Natural killer cell (primary cell): ENCODE measurements at regions of chr1 and their contacts with region 1.

Region 1: GRCh38 chr1:202184750-202185460 is 8.7 kb upstream of the LGR6 start:
- DNase-seq: peak; percentile 65 to 83
- ATAC-seq: peak; percentile 49 to 72 (median 68)
- H3K4me3 ChIP-seq: no peak overlapping the region
- H3K4me3 Mint-ChIP-seq: no peak overlapping the region
- H3K27ac ChIP-seq: no peak overlapping the region
- H3K27ac Mint-ChIP-seq: peak overlapping the region in 1 of 2 donors; percentile 38
- H3K4me1 ChIP-seq: peaks cover 7% of the 10 kb centered on the region
- H3K4me1 Mint-ChIP-seq: peaks cover 0 to 15% of the 10 kb centered on the region in 2 donors
- H3K27me3 ChIP-seq: no peaks in the 10 kb centered on the region
- H3K27me3 Mint-ChIP-seq: peaks cover 0 to 9% of the 10 kb centered on the region in 2 donors
- CTCF ChIP-seq: peak; percentile 76

Region 2: DNA sequence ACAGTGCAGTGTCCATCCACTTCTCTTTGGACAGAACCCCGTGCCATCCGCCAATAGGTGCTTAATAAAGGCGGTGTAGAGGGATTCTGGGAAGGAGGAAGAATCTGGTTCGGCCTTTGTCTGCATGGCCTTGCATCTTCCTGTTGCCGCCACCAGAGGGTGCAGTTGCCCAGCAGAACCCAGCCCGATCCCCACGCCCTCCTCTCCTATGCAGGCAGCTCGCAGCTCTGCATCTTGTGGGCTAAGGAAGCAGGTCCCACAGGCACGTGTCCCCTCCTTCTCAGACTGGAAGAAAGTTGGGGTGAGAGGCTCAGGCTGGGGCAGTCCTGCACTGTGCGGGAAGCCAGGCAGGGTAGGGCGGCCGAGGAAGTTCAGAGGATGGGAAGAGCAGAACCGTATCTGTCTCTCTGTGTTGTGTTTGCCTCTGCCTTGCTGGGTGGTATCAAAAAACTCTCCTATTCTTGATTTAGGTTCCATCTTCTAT is 625.2 kb before region 1 on chr1:
- intact Hi-C with region 1: no loop called
- DNase-seq: peak; percentile 49 to 80
- ATAC-seq: peak; percentile 80 to 98 (median 93)
- H3K4me3 ChIP-seq: no peak overlapping the region
- H3K4me3 Mint-ChIP-seq: no peak overlapping the region
- H3K27ac ChIP-seq: no peak overlapping the region
- H3K27ac Mint-ChIP-seq: no peak overlapping the region
- H3K4me1 ChIP-seq: peaks cover 5% of the 10 kb centered on the region
- H3K4me1 Mint-ChIP-seq: peaks cover 4 to 7% of the 10 kb centered on the region in 2 donors
- H3K27me3 ChIP-seq: no peaks in the 10 kb centered on the region
- H3K27me3 Mint-ChIP-seq: peaks cover 0 to 5% of the 10 kb centered on the region in 2 donors
- CTCF ChIP-seq: peak; percentile 80

Region 3: DNA sequence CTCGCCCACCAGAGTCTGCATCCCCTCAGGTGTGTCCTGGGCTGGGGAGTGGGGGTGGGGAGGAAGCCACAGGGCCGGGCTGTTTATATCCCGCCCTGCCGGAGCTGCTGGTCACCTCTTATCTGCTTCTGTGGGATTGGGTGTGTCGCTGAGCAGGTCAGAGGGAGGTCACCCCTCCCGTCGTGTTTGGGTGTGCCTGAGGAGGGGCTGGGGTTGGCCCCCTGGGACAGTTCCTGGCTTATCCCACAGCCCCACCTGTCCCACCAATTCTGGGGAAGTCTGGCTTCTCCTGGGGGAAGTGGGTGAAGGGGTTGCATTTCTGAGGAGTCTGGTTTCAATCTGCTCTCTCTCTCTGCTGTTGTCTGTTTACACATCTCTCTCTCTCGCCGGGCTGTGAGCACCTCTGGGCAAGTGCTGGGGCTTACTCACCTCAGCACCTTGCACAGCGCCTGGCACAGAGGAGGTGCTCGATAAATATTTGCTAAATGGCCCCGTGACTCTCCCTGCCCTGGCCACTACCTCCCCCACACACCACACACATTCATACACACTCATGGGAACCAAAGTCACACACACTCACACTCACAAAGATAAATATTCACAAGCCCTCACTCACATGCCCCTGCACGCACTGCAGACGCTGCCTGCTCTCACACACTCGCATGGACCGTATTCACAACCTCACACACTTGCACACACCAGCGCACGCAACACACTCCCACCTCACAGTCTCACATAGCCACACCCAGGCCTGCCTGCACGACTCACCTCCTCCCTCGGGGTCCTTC is 166.2 kb before region 1 on chr1:
- intact Hi-C with region 1: no loop called
- DNase-seq: no peak
- ATAC-seq: peak in 2 of 3 donors; percentile 45 to 49
- H3K4me3 ChIP-seq: no peak overlapping the region
- H3K4me3 Mint-ChIP-seq: no peak overlapping the region
- H3K27ac ChIP-seq: no peak overlapping the region
- H3K27ac Mint-ChIP-seq: peak overlapping the region in 1 of 2 donors; percentile 22
- H3K4me1 ChIP-seq: peaks cover 9% of the 10 kb centered on the region
- H3K4me1 Mint-ChIP-seq: peaks cover 6 to 22% of the 10 kb centered on the region in 2 donors
- H3K27me3 ChIP-seq: no peaks in the 10 kb centered on the region
- H3K27me3 Mint-ChIP-seq: peaks cover 7 to 9% of the 10 kb centered on the region in 2 donors
- CTCF ChIP-seq: no peak

Region 4: DNA sequence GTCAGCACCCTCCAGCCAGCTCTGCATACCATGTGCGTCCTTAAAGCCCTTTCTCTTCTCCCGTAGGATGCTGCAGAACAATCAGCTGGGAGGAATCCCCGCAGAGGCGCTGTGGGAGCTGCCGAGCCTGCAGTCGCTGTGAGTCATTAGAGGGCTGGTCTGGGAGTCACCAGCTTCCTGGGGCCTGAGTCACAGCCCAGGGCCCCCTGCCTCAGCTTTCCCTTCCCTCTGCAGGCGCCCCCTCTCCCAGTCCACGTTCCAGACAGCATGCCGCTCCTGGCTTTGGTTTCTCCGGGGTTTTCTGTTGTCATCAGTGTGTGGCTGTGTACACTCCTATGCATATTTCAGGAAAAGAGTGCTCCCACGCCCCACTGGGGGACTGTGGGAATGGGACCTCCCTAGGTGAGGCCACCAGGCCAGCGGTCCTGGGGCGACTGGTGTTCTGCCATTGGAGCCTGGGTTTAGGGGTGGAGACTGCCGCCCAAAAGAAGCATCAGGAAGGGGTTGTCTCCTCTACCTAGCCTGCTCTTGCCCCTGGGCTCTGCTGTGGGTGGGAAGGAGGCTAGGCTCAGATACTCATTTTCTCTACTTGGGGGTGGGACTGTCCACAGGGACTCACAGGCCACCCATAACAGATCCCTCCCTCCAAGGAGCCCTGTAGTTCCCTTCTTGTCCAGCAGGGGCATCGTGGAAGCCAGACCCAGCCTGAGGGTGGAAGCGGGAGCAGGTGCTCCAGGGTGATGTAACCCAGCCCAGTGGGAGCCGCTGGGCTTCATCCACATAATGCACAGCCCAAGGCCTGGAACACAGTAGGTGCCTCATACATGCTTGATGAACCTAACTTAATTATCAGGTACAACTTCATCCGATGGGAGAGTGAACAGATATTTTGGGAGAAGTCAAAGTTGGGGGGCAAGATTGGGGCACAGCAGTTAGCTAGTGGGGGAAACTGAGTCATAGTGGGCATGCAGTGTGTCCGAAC is 51.2 kb after region 1 on chr1:
- intact Hi-C with region 1: loop called (anchors 1 kb)
- DNase-seq: peak; percentile 62 to 78
- ATAC-seq: peak; percentile 69 to 90 (median 86)
- H3K4me3 ChIP-seq: no peak overlapping the region
- H3K4me3 Mint-ChIP-seq: no peak overlapping the region
- H3K27ac ChIP-seq: no peak overlapping the region
- H3K27ac Mint-ChIP-seq: peak overlapping the region; percentile 53 to 81
- H3K4me1 ChIP-seq: no peaks in the 10 kb centered on the region
- H3K4me1 Mint-ChIP-seq: peaks cover 6 to 21% of the 10 kb centered on the region in 2 donors
- H3K27me3 ChIP-seq: no peaks in the 10 kb centered on the region
- H3K27me3 Mint-ChIP-seq: peaks cover 0 to 2% of the 10 kb centered on the region in 2 donors
- CTCF ChIP-seq: peak; percentile 87